Sigmoid colon (tissue), 7 donors: ENCODE measurements at regions of chrX and their contacts with region 1.

Region 1: DNA sequence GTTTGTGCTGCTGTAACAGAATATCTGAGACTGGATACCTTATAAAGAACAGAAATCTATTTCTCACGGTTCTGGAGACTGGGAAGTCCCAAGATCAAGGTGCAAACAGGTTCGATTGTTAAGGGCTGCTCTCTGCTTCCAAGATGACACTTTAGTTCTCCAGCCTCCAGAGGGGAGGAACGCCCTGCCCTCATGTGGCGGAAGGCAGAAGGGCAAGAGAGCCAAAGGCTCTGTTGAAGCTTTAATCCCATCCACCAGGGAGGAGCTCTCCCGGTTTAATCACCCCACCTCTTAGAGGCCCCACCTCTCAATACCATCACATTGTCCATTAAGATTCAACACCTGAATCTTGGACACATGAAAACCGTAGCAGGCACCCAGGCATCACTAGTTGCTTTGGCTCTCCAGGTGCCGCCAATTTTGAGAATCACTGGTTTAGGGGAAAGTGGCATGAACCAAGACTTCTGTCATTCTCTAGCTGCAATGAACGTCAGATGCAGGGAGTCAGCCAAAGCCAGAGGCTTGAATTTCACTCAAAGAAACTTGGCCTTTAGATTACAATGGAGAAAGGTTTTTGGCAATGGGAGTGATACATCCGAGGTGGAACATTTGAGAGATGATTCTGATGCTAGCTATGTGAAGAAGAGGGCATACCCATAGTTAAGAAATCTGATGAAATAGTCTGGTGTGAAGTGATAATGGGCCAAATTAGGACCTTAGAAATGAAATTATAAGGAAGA is 15.7 kb downstream of the FHL1 start:
- DNase-seq: peak; percentile 83
- H3K4me3 ChIP-seq: no peak overlapping the region
- H3K27ac ChIP-seq: peak overlapping the region; percentile 94 to 99 (median 97)
- H3K4me1 ChIP-seq: peaks cover 0 to 84% (median 32%) of the 10 kb centered on the region in 4 donors
- H3K27me3 ChIP-seq: no peaks in the 10 kb centered on the region
- CTCF ChIP-seq: peak; percentile 41 to 59 (median 56)
- EP300 ChIP-seq: no peak
- POLR2A ChIP-seq: no peak

Region 2: DNA sequence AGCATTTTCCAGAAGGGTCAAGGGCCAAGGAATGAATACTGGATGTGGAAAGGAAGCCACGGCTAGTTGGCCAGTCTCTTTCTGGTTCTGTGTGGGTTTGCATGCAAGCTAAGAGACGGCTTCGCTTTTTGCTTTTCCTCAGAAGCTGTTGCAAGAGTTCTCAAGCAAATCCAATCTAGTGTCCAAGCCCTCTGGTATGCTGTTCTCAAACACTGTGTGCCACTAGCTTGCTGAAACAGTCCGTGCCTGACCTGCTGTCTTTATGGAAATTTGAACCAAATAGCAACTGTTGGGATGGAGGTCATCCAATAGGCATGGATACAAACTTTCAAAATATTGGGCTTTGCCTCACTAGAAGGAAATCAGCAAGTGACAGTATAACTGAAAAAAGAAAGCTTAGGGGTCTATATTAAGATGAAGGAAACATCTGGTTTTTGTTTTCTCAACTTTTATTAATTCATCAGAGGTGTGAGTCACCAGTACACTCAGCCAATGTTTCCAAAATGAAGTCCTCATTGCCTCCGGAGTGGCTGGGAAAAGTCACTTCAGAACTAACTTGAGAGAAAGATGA is 107.3 kb before region 1 on chrX:
- intact Hi-C with region 1: loop called (anchors 5 kb)
- DNase-seq: peak; percentile 91
- H3K4me3 ChIP-seq: peak overlapping the region in 2 of 4 donors; percentile 10 to 11
- H3K27ac ChIP-seq: peak overlapping the region; percentile 82 to 88 (median 87)
- H3K4me1 ChIP-seq: peaks cover 0 to 35% (median 15%) of the 10 kb centered on the region in 4 donors
- H3K27me3 ChIP-seq: no peaks in the 10 kb centered on the region
- CTCF ChIP-seq: no peak
- EP300 ChIP-seq: peak; percentile 78 to 98 (median 83)
- POLR2A ChIP-seq: peak in 1 of 2 donors; percentile 34